Naive thymus-derived CD4-positive, alpha-beta T cell (primary cell): ENCODE measurements at regions of chr19 and their contacts with region 1.

Region 1: GRCh38 chr19:3606690-3607289 is at the start of gene TBXA2R:
- DNase-seq: peak in 6 of 9 donors; percentile 33 to 68 (median 46)
- ATAC-seq: peak; percentile 58
- H3K4me3 ChIP-seq: peak within 1 kb of the TSS; percentile 44
- H3K4me3 Mint-ChIP-seq: peak within 1 kb of the TSS in 8 of 10 donors; percentile 45 to 69 (median 58)
- H3K27ac ChIP-seq: peak within 1 kb of the TSS; percentile 65
- H3K27ac Mint-ChIP-seq: peak within 1 kb of the TSS in 5 of 9 donors; percentile 41 to 70 (median 53)
- H3K4me1 ChIP-seq: peaks cover 19 to 22% of the 10 kb centered on the region in 2 donors
- H3K4me1 Mint-ChIP-seq: peaks cover 7 to 15% (median 11%) of the 10 kb centered on the region in 7 donors
- H3K27me3 ChIP-seq: no peaks in the 10 kb centered on the region
- H3K27me3 Mint-ChIP-seq: peaks cover 0 to 9% (median 0%) of the 10 kb centered on the region in 5 donors
- total RNA-seq, gene TBXA2R: 0.73 to 5.9 (median 4.1) TPM

Region 2: DNA sequence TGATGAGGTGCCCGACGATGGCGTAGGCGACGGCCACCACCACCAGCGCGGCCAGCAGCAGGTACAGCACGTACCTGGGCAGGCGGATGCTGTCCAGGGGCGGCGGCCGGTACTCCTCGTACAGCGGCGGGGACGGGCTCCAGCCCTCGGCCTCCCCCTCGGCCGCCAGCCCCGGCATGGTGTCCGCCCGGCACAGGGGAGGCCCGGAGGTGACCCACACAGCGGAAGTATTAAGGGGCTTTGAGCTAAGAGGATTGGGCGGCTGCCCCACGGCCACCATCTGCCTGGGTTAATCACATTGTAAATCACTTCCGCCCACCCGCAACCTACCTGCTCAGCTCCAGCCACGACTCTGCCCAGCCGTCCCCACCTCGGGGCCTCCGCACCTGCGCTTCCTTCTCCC is 123.6 kb before region 1 on chr19 and contains the start of gene SMIM44:
- CTCF ChIA-PET with region 1: no interaction called
- POLR2A ChIA-PET with region 1: no interaction called
- intact Hi-C with region 1: no loop called
- DNase-seq: peak in 1 of 9 donors; percentile 7
- ATAC-seq: no peak
- H3K4me3 ChIP-seq: no peak within 1 kb of the TSS
- H3K4me3 Mint-ChIP-seq: no peak within 1 kb of the TSS
- H3K27ac ChIP-seq: no peak within 1 kb of the TSS
- H3K27ac Mint-ChIP-seq: no peak within 1 kb of the TSS
- H3K4me1 ChIP-seq: peaks cover 0 to 6% of the 10 kb centered on the region in 2 donors
- H3K4me1 Mint-ChIP-seq: peaks cover 5 to 19% (median 10%) of the 10 kb centered on the region in 7 donors
- H3K27me3 ChIP-seq: no peaks in the 10 kb centered on the region
- H3K27me3 Mint-ChIP-seq: peaks cover 0 to 3% (median 0%) of the 10 kb centered on the region in 5 donors
- total RNA-seq, gene SMIM44: not detected

Region 3: GRCh38 chr19:3572132-3572854 is 34.5 kb before region 1 on chr19:
- CTCF ChIA-PET with region 1: no interaction called
- POLR2A ChIA-PET with region 1: no interaction called
- intact Hi-C with region 1: loop called in 1 of 2 experiments (anchors 5 kb)
- DNase-seq: peak; percentile 94 to 99 (median 98)
- ATAC-seq: peak; percentile 96
- H3K4me3 ChIP-seq: peak overlapping the region; percentile 75
- H3K4me3 Mint-ChIP-seq: peak overlapping the region; percentile 72 to 91 (median 82)
- H3K27ac ChIP-seq: peak overlapping the region; percentile 62
- H3K27ac Mint-ChIP-seq: peak overlapping the region in 8 of 9 donors; percentile 30 to 84 (median 61)
- H3K4me1 ChIP-seq: peaks cover 12 to 13% of the 10 kb centered on the region in 2 donors
- H3K4me1 Mint-ChIP-seq: peaks cover 11 to 29% (median 14%) of the 10 kb centered on the region in 7 donors
- H3K27me3 ChIP-seq: no peaks in the 10 kb centered on the region
- H3K27me3 Mint-ChIP-seq: no peaks in the 10 kb centered on the region

Region 4: GRCh38 chr19:3618144-3618810 is 11.5 kb after region 1 on chr19:
- CTCF ChIA-PET with region 1: interaction called, 3 read pairs
- POLR2A ChIA-PET with region 1: interaction called, 4 read pairs
- intact Hi-C with region 1: loop called in 1 of 2 experiments (anchors 1 kb)
- DNase-seq: peak in 7 of 9 donors; percentile 38 to 71 (median 45)
- ATAC-seq: peak; percentile 82
- H3K4me3 ChIP-seq: no peak overlapping the region
- H3K4me3 Mint-ChIP-seq: peak overlapping the region in 1 of 10 donors; percentile 76
- H3K27ac ChIP-seq: no peak overlapping the region
- H3K27ac Mint-ChIP-seq: no peak overlapping the region
- H3K4me1 ChIP-seq: peaks cover 0 to 13% of the 10 kb centered on the region in 2 donors
- H3K4me1 Mint-ChIP-seq: peaks cover 0 to 22% (median 15%) of the 10 kb centered on the region in 7 donors
- H3K27me3 ChIP-seq: no peaks in the 10 kb centered on the region
- H3K27me3 Mint-ChIP-seq: no peaks in the 10 kb centered on the region

Region 5: DNA sequence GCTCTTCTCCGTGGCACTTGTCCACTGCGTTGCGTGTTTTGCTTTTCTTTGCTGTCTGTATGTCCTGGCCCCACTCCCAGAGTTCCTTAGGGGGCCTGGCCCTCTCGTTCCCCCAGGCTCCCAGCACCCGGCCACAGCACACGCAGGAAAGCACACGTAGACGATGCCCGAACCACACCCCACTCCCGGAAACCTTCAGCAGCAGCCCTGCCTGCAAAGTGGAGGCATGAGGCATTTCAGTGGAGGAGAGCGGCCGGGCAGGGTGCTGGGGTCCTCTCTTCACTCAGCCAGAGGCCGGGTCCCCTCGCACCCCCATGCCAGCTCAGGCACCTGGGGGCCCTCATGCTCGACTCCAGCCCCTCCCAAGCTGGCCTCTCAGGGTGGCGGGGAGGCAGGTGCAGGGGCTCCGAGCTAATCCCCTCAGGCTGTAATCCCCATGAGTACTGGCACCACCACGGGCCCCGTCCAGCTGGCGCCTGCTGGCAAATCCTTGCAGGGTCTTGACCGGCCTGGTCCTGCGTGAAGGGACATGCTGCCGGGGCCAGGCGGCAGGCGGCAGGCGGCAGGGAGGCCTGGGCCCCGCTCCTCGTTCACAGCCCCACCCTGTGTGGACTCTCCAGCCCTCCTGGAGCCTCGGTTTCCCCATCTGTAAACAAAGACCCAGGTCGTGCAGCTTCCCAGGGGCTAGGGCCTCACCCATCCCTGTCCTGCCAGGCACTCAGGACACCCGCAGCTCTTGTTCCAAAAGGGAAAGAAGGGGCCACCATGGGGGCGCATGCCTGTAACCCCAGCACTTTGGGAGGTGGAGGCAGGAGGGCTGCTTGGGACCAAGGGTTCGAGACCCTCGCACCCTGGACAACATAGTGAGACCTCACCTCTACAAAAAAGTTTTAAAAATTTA is 86.5 kb after region 1 on chr19:
- CTCF ChIA-PET with region 1: no interaction called
- POLR2A ChIA-PET with region 1: no interaction called
- intact Hi-C with region 1: no loop called
- DNase-seq: no peak
- ATAC-seq: no peak
- H3K4me3 ChIP-seq: no peak overlapping the region
- H3K4me3 Mint-ChIP-seq: no peak overlapping the region
- H3K27ac ChIP-seq: no peak overlapping the region
- H3K27ac Mint-ChIP-seq: no peak overlapping the region
- H3K4me1 ChIP-seq: peaks cover 0 to 11% of the 10 kb centered on the region in 2 donors
- H3K4me1 Mint-ChIP-seq: peaks cover 22 to 53% (median 36%) of the 10 kb centered on the region in 7 donors
- H3K27me3 ChIP-seq: no peaks in the 10 kb centered on the region
- H3K27me3 Mint-ChIP-seq: no peaks in the 10 kb centered on the region